ENCODE measurements at regions of chr16 and their contacts with region 1.

Region 1: GRCh38 chr16:25014500-25015147 is 545 bp downstream of the ARHGAP17 start:
- DNase-seq: peak; percentile 56
- ATAC-seq: peak; percentile 39
- H3K4me3 Mint-ChIP-seq: peak overlapping the region; percentile 85
- H3K27ac Mint-ChIP-seq: peak overlapping the region; percentile 93
- H3K4me1 Mint-ChIP-seq: peaks cover 63% of the 10 kb centered on the region
- H3K27me3 Mint-ChIP-seq: no peaks in the 10 kb centered on the region

Region 2: DNA sequence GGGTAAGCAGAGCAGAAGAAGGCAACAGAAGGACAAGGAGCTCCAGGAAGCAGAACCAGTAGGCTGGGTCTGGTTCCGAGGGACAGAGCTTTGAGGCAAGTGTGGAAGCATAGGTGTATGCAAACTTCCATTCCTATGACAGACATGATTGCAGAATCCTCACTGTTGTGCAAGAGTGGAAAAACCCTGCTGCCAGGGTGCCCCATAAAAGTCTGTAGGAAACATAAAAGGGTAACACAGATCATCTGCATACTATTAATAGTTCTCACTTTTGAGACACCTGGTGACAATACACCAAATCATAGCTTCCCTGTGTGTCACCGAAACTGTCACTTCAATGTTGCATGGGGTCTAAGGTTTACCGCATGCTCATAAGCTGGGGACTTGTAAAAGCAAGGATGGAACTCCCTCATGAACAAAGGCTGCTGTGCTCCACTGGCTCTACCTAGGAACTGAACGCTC is 39.2 kb before region 1 on chr16:
- POLR2A ChIA-PET with region 1: no interaction called
- DNase-seq: no peak
- ATAC-seq: no peak
- H3K4me3 Mint-ChIP-seq: no peak overlapping the region
- H3K27ac Mint-ChIP-seq: peak overlapping the region; percentile 14
- H3K4me1 Mint-ChIP-seq: peaks cover 27% of the 10 kb centered on the region
- H3K27me3 Mint-ChIP-seq: no peaks in the 10 kb centered on the region

Region 3: DNA sequence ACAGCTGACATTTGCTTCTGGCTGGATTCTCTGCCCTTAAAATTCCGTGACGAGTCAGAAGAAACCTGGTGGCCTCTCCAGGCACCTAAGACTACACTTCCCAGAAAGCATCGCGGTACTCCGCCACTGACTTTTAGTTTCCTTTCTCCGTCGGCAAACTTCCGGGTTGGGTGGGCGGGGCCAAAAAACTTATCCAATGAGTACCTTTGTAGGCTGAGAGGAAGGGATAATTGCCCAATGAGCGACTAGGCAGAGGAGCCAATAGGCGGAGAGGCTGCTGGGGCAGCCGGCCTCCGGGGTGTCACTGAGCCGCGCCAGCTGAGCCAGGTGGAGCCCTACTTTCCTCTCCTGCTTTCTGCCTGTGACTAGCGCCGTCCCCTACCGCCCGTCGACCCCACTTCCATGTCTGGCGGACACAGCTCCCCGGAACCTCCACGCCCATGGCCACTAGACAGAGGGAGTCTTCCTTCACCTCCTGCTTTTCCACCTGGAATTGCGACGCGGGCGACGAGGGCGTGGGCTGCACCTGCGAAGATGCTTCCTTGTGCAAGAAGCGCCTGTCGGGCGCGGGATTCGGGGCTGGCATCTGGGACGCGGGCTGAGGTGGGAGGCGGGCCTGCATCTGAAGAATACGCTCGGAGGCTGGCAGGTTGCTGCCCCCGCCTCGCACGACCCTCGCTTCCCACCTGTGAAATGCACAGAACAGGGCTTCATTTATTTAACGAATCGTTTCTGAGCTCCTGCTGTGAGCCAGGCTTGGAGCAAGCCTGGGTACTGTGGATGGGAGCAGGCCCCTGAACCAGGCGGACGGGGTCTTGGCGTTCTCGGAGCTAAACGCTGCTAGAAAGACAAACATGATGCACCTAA is 17.1 kb after region 1 on chr16:
- POLR2A ChIA-PET with region 1: interaction called, 28 read pairs
- DNase-seq: peak; percentile 82
- ATAC-seq: peak; percentile 100
- H3K4me3 Mint-ChIP-seq: peak overlapping the region; percentile 96
- H3K27ac Mint-ChIP-seq: peak overlapping the region; percentile 95
- H3K4me1 Mint-ChIP-seq: peaks cover 28% of the 10 kb centered on the region
- H3K27me3 Mint-ChIP-seq: no peaks in the 10 kb centered on the region

Region 4: GRCh38 chr16:25051406-25052150 is 37.0 kb after region 1 on chr16:
- POLR2A ChIA-PET with region 1: interaction called, 54 read pairs
- DNase-seq: no peak
- ATAC-seq: no peak
- H3K4me3 Mint-ChIP-seq: peak overlapping the region; percentile 67
- H3K27ac Mint-ChIP-seq: peak overlapping the region; percentile 73
- H3K4me1 Mint-ChIP-seq: peaks cover 50% of the 10 kb centered on the region
- H3K27me3 Mint-ChIP-seq: no peaks in the 10 kb centered on the region

Region 5: DNA sequence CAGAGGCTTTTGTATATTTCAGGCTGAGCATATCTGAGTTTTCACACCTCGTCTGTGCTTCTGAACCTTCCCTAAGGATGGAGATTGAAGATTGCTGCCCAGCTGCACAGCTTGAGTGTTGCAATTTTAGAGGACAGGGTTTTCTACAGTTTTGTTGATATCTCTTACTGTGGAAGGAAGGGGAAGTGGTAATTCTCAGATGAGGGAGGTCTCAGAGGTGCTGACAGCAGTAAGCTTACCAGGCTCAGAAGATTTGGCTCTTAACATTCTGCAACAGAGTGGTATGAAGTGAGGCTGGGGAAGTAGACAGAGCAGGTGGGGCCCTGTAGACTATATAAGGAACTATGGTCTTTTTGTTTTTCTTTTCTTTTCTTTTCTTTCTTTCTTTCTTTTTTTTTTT is 46.3 kb after region 1 on chr16:
- POLR2A ChIA-PET with region 1: interaction called, 18 read pairs
- DNase-seq: no peak
- ATAC-seq: peak; percentile 100
- H3K4me3 Mint-ChIP-seq: peak overlapping the region; percentile 61
- H3K27ac Mint-ChIP-seq: peak overlapping the region; percentile 98
- H3K4me1 Mint-ChIP-seq: peaks cover 38% of the 10 kb centered on the region
- H3K27me3 Mint-ChIP-seq: no peaks in the 10 kb centered on the region

Measured in activated naive CD8-positive, alpha-beta T cell treated with anti-CD3 and anti-CD28 coated beads, Interleukin-2, amount 10 ng/mL, durations not matched to agents 7 days and 5 days (primary cell).